Panc1 (cell line): ENCODE measurements at regions of chrX and their contacts with region 1.

Region 1: DNA sequence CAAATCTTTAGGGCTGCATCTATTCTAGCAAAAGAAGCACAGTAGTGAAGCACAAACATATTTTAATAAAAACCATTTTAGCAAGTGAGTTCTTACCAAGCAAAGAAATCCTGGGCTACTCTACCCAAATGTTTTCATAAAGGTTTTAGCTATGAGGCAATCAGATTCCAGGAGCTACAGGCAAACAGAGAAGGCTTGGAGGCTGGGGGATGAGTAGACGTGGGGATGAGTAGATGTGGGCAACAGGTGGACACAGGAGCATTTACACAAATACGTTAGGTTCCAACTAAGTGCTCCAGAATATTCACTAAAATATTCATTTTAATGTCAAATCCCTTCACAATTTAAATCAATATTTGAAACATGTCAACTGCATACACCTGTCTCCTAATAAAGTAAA is 34.5 kb downstream of the ATP11C start:
- DNase-seq: no peak
- ATAC-seq: no peak
- H3K4me3 ChIP-seq: no peak overlapping the region
- H3K27ac ChIP-seq: no peak overlapping the region
- H3K4me1 ChIP-seq: peaks cover 3% of the 10 kb centered on the region
- H3K27me3 ChIP-seq: no peaks in the 10 kb centered on the region
- CTCF ChIP-seq: no peak

Region 2: DNA sequence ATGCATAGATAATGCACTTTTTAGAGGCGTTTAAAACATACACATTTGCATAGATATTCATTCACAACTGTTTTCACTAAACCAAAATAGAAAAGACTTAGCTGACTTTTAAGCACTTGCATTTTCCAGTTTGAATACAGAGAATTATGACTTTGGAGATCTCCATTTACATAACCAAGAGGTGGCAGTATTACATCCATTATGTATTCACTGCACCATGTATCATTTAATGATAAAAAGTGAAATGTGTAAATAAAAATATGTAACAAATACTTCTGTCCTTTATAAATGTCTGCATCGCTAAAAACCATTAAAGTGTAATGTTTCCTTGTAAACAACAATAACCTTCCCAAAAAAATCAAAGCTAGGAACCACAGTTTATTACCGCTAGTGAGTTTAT is 1600.1 kb before region 1 on chrX:
- CTCF ChIA-PET with region 1: no interaction called
- POLR2A ChIA-PET with region 1: no interaction called
- in situ Hi-C with region 1: no loop called
- intact Hi-C with region 1: no loop called
- DNase-seq: no peak
- ATAC-seq: no peak
- H3K4me3 ChIP-seq: no peak overlapping the region
- H3K27ac ChIP-seq: no peak overlapping the region
- H3K4me1 ChIP-seq: no peaks in the 10 kb centered on the region
- H3K27me3 ChIP-seq: no peaks in the 10 kb centered on the region
- CTCF ChIP-seq: peak; percentile 20; the same call in 1 of the 2 replicates

Region 3: GRCh38 chrX:139559383-139560042 is 338.8 kb before region 1 on chrX:
- CTCF ChIA-PET with region 1: no interaction called
- POLR2A ChIA-PET with region 1: no interaction called
- in situ Hi-C with region 1: no loop called
- intact Hi-C with region 1: no loop called
- DNase-seq: peak; percentile 46
- ATAC-seq: peak; percentile 89
- H3K4me3 ChIP-seq: no peak overlapping the region
- H3K27ac ChIP-seq: no peak overlapping the region
- H3K4me1 ChIP-seq: no peaks in the 10 kb centered on the region
- H3K27me3 ChIP-seq: no peaks in the 10 kb centered on the region; the same call in 1 of the 2 replicates
- CTCF ChIP-seq: peak; percentile 68

Region 4: DNA sequence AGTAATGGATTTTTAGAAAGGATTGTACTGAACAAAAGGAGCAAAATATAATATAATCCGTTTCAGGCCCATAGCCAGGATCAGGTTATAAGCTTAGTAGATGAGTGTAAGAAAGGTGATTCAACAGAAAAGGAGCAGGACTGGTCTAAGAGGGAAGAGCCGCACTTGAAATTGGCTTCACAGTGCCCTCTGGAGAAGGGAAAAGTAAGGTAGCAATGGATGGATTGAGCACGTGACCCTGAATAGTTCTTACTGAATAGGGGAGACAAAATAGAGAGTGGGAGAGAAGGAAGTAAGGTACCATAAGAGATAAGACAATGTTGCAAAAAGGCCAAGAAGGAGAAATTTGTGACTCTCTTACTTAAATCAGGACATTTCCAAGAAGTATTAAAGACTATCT is 51.4 kb after region 1 on chrX:
- CTCF ChIA-PET with region 1: no interaction called
- POLR2A ChIA-PET with region 1: interaction called, 10 read pairs
- in situ Hi-C with region 1: no loop called
- intact Hi-C with region 1: no loop called
- DNase-seq: no peak
- ATAC-seq: no peak
- H3K4me3 ChIP-seq: no peak overlapping the region
- H3K27ac ChIP-seq: no peak overlapping the region
- H3K4me1 ChIP-seq: no peaks in the 10 kb centered on the region
- H3K27me3 ChIP-seq: no peaks in the 10 kb centered on the region; the same call in 1 of the 2 replicates
- CTCF ChIP-seq: no peak